ENCODE measurements at regions of chr12 and their contacts with region 1.

Region 1: DNA sequence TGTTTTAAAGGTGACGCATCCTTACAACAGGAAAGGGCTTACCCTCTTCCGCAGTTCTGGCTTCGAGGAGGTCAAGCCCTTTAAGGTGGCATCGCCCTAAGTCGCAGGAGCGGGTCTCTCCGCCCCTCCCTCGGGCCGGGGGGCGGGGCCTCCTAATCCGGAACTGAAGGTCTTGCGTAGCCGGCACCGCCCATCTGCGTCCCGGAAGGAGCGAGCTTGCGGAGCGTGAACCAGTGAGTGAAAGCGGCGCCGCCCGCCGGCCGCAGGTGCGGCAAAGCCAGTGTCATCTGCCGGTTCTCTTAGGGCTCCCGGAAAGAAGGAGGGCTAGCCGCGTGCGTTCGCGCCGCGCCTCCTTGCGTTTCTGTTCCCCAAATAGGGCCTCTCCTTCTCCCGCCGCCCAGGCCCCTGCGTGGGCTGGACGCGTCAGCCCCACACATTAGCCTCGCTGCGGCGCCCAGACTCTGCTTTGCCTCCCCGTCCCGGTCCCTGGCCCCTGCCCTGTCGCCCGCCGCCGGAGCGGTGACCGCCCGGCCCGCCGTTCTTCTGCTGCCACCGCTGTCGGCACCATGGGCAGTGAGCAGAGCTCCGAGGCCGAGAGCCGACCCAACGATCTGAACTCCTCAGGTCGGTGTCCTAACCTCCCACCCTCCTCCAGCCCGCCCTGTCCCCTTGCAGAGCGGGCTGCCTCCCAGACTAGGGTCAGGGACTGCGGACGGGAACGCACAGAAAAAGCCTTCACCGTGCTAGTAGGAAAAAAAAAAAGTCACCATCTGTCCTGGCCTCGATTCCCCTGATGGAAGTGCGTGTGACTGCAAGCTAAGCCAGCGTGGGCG is at the start of gene BORCS5:
- DNase-seq: peak; percentile 99
- H3K4me3 Mint-ChIP-seq: peak within 1 kb of the TSS; percentile 87
- H3K27ac Mint-ChIP-seq: peak within 1 kb of the TSS; percentile 93
- H3K4me1 Mint-ChIP-seq: peaks cover 51% of the 10 kb centered on the region
- H3K27me3 Mint-ChIP-seq: no peaks in the 10 kb centered on the region
- total RNA-seq, gene BORCS5: 30.9 to 32.4 TPM

Region 2: DNA sequence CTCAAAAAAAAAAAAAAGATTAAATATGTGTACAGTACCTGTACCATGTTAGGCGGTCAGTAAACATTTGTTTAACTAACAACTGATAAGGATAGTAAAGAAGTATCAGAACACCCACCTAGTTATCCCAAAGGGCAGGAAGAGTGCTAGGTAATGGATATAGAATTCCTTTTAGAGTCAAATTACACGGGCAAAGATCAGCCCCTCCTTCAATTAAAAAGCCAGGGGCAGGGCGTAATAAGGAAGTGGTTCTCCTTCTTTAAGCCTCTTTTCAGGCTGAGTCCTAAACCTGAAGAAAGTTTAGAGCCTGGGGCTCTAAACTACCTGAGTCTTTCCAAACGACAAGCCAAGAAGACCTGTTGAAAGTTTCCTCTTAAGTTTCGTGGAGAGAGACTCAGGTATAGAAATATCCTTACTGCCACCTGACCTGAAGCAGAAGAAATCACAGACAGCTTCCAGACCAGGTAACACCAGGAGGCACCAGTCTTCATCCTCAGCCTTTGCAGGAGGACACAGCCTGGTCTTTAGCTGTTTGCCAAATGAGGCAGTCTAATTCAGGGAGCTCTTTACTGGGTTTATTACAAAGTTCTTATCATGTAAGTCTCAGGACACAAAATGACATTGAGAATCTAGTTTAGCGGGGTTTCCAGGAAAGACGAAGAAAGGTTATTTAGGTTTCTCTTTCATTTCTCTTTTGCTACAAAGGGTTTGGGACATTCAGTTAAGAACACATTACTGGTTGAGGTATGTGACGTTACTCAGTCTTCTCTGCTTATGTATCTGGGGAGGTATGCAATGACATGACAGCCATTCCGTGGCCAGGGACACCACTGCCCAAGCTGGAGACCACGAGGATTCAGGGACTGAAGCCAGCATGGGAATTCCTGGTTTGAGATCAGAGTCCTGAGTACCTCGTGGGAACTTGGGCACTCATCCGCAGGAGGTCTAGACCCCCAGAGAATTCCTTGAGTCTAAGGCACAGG is 286.1 kb before region 1 on chr12 and contains the start of gene BCL2L14:
- CTCF ChIA-PET with region 1: interaction called, 3 read pairs
- POLR2A ChIA-PET with region 1: interaction called, 21 read pairs
- DNase-seq: peak; percentile 38
- H3K4me3 Mint-ChIP-seq: peak within 1 kb of the TSS; percentile 83
- H3K27ac Mint-ChIP-seq: peak within 1 kb of the TSS; percentile 89
- H3K4me1 Mint-ChIP-seq: peaks cover 29% of the 10 kb centered on the region
- H3K27me3 Mint-ChIP-seq: peaks cover 2% of the 10 kb centered on the region
- total RNA-seq, gene BCL2L14: 13.0 to 13.9 TPM

Region 3: GRCh38 chr12:12384571-12385340 is 27.7 kb after region 1 on chr12:
- CTCF ChIA-PET with region 1: interaction called, 4 read pairs
- POLR2A ChIA-PET with region 1: interaction called, 38 read pairs
- DNase-seq: peak; percentile 85
- H3K4me3 Mint-ChIP-seq: peak overlapping the region; percentile 57
- H3K27ac Mint-ChIP-seq: peak overlapping the region; percentile 97
- H3K4me1 Mint-ChIP-seq: peaks cover 83% of the 10 kb centered on the region
- H3K27me3 Mint-ChIP-seq: no peaks in the 10 kb centered on the region

Region 4: DNA sequence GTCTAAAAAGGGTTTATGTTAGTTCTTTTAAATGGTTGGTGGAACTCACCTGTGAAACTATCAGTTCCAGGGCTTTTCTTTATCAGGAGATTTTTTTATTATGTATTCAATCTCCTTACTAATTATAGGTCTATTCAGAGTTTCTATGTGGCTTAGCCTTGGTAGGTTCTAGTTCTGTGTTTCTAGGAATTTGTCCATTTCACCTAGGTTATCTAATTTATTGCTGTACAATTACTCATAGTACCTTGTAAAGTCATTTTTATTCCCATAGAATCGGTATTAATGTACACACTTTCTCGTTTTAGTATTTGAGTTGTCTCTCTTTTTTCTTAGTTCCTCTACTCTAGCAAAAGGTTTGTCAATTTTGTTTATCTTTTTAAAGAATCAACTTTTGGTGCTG is 58.8 kb after region 1 on chr12:
- CTCF ChIA-PET with region 1: no interaction called
- POLR2A ChIA-PET with region 1: no interaction called
- DNase-seq: no peak
- H3K4me3 Mint-ChIP-seq: no peak overlapping the region
- H3K27ac Mint-ChIP-seq: peak overlapping the region; percentile 12
- H3K4me1 Mint-ChIP-seq: peaks cover 31% of the 10 kb centered on the region
- H3K27me3 Mint-ChIP-seq: no peaks in the 10 kb centered on the region

Region 5: DNA sequence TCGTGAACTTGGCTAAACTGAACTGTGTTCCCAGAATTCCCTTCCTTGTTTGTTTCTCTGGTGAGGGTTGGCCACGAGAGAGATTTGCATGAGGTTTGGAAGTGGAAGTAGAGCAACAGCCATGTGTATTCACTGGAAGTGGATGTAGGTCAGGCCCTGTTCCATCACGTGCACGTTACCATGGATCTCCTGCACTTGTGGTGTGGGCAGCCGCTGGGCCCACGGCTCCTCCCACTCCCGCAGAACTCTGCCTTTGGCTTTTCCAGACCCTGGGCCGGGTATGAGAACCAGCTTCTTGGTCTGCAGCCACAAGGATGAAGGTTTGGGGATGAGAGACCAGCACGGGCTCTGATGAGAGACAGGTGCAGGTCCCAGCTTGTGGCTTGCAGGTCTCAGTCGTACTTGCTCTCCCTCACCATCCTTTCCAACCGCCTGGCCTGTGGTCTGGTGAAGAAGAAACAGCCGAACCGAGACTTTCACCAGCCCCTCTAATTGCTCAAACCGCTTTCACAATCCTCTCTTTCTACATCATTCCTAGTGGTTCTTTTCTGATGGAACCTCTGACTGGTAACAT is 110.7 kb after region 1 on chr12:
- CTCF ChIA-PET with region 1: no interaction called
- POLR2A ChIA-PET with region 1: interaction called, 37 read pairs
- DNase-seq: peak; percentile 77
- H3K4me3 Mint-ChIP-seq: peak overlapping the region; percentile 40
- H3K27ac Mint-ChIP-seq: peak overlapping the region; percentile 97
- H3K4me1 Mint-ChIP-seq: peaks cover 87% of the 10 kb centered on the region
- H3K27me3 Mint-ChIP-seq: no peaks in the 10 kb centered on the region

Region 6: DNA sequence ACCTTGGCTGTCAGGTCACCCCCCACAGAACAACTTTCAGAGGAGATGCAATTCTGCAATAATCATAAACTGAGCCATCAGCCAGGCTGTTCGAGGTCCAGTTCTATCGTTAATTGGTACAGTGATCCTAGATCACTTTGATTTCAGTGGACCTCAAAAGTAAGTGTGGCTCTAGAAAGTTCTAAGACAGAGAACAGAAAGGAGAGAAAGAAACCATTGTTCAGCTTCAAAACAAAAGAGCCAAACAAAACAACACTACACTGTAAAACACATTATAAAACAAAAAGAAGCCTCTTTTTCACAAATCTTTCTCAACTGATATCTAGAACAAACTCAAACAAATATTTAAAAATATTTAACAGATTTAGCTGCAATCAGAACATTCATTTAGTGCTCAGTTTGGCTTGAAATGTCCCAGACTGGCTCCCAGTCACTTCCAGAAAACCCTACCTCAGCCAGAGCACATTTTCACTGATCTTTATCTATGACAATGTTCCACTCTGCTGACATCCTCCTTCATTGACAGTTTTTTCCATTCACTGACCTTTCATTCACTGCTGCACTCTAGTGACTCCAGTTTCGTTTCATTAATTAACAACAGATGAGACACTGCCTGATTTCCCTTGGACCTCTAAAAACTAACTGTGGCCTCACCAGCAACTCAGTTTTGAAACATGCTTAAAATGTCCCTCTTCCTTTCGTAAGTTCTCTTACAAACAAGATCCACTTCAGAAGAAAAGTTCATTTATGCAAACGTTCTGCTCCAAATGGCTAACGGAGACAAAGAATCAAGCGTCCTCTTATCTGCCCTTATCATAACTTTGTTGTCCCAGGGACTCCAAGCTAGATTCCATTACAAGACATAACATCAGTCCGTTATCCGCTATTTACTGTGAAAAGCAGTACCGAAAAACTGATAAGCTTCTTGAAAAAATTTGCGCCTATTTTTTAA is 148.7 kb after region 1 on chr12:
- CTCF ChIA-PET with region 1: interaction called, 3 read pairs
- POLR2A ChIA-PET with region 1: interaction called, 12 read pairs
- DNase-seq: no peak
- H3K4me3 Mint-ChIP-seq: peak overlapping the region; percentile 65
- H3K27ac Mint-ChIP-seq: peak overlapping the region; percentile 81
- H3K4me1 Mint-ChIP-seq: peaks cover 76% of the 10 kb centered on the region
- H3K27me3 Mint-ChIP-seq: no peaks in the 10 kb centered on the region

Region 7: DNA sequence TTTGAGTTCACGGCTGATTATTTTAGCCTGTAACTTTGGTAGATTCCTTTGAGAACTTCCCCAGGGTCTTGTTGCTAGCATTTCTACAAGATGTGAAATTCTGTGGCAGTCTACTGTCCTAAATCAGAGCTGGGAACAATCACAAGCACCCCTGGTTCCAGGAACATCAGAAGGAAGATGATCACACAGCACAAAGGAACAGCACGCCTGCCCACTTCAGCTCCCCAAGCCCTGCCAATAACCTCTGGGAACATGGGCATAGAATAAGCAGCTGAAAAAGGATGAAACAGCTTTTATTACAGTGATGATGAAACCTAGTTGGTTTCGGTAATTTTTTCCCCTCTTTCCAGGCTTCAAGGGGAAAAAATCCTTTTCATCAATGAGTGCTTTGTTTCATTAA is 326.6 kb after region 1 on chr12:
- CTCF ChIA-PET with region 1: no interaction called
- POLR2A ChIA-PET with region 1: no interaction called
- DNase-seq: no peak
- H3K4me3 Mint-ChIP-seq: no peak overlapping the region
- H3K27ac Mint-ChIP-seq: no peak overlapping the region
- H3K4me1 Mint-ChIP-seq: peaks cover 2% of the 10 kb centered on the region
- H3K27me3 Mint-ChIP-seq: no peaks in the 10 kb centered on the region

Region 8: DNA sequence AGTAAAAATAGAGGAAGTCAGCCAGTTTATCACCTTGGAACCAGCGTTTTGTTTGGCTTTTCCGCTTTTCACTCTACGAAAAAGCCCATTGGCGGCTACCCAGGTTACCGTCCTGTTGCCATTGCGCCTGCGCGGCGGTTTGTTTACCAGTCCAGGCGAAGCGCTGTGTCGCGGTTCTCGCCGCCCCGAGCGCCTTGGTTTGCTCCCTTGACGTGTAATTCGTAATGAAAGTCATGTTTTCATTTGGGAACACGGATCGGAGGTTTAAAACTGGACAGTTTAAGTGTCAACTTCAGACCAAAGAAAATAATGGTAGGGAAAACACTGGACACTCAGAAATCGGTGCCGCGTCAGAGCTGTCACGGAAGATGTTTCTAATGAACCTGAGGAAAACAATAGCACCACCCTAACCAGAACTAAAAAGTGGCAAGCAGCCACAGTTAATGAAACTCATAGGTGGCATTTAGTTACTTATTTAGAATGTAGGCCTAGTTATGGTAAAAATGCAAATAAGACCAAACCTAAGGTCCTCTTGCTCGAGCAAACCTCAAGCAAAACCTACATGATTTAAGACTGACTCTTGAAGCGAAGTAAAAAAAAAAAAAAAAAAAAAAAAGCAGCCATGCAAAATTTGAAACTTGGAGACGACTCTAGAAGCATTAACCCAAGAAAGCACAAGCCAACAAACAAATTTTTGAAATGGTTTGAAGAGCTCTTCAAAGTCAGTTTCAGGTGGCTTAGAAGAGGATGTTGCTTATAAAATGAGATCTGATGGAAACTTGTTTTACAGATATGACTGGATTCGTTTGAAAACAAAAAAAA is 339.7 kb after region 1 on chr12:
- CTCF ChIA-PET with region 1: interaction called, 6 read pairs
- POLR2A ChIA-PET with region 1: interaction called, 83 read pairs
- DNase-seq: peak; percentile 93
- H3K4me3 Mint-ChIP-seq: peak overlapping the region; percentile 83
- H3K27ac Mint-ChIP-seq: peak overlapping the region; percentile 100
- H3K4me1 Mint-ChIP-seq: peaks cover 63% of the 10 kb centered on the region
- H3K27me3 Mint-ChIP-seq: no peaks in the 10 kb centered on the region

Region 9: DNA sequence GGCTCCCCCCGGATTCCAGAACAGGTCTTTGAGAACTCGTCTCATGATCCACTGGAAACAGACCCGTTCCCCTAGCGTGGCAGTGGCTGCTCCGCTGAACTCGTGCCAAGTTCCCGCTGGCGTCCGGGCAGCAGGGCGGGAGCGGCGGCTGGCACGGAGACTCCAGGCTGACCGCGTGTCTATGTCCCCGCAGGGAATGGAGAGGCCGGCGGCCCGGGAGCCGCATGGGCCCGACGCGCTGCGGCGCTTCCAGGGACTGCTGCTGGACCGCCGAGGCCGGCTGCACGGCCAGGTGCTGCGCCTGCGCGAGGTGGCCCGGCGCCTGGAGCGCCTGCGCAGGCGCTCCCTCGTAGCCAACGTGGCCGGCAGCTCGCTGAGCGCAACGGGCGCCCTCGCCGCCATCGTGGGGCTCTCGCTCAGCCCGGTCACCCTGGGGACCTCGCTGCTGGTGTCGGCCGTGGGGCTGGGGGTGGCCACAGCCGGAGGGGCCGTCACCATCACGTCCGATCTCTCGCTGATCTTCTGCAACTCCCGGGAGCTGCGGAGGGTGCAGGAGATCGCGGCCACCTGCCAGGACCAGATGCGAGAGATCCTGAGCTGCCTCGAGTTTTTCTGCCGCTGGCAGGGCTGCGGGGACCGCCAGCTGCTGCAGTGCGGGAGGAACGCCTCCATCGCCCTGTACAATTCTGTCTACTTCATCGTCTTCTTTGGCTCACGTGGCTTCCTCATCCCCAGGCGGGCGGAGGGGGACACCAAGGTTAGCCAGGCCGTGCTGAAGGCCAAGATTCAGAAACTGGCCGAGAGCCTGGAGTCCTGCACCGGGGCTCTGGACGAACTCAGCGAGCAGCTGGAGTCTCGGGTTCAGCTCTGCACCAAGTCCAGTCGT is 429.9 kb after region 1 on chr12:
- CTCF ChIA-PET with region 1: no interaction called
- POLR2A ChIA-PET with region 1: interaction called, 13 read pairs
- DNase-seq: peak; percentile 75
- H3K4me3 Mint-ChIP-seq: peak overlapping the region; percentile 78
- H3K27ac Mint-ChIP-seq: no peak overlapping the region
- H3K4me1 Mint-ChIP-seq: peaks cover 43% of the 10 kb centered on the region
- H3K27me3 Mint-ChIP-seq: no peaks in the 10 kb centered on the region